AG04450 (cell line): ENCODE measurements at regions of chr16 and their contacts with region 1.

Region 1: GRCh38 chr16:58661199-58661830 is 23.3 kb downstream of the SLC38A7 start:
- DNase-seq: peak; percentile 66
- H3K4me3 ChIP-seq: no peak overlapping the region
- H3K27ac ChIP-seq: no peak overlapping the region
- H3K27me3 ChIP-seq: no peaks in the 10 kb centered on the region
- CTCF ChIP-seq: peak; percentile 81

Region 2: DNA sequence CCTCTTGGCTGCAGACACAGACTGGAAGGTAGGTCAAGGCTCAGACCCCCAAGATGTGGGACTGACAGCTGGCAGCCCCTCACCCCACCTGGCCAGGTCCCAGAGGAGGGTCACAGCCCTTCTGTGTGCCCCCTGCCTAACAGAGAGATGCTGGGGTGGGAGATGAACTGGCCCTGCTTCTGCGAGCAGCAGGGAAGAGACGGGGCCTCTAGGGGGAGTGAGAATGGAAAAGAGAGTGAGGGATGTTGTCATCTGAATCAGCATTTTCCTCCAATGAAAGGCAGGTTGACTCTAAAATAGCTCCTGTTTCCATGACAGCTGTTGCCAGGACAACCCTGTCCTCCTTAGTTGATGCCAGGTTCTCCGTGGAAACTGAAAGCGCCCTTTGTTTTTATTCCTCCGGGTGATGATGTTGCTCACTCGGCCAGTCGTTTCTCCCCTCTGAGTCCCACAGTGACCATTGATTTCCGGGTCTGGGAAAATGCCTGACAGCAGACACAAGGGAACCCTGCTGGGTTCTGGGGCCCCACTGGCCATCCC is 166.3 kb before region 1 on chr16:
- CTCF ChIA-PET with region 1: interaction called, 18 read pairs
- POLR2A ChIA-PET with region 1: no interaction called
- DNase-seq: peak; percentile 93
- H3K4me3 ChIP-seq: peak overlapping the region; percentile 31
- H3K27ac ChIP-seq: peak overlapping the region; percentile 85
- H3K27me3 ChIP-seq: peaks cover 6% of the 10 kb centered on the region
- CTCF ChIP-seq: peak; percentile 76

Region 3: DNA sequence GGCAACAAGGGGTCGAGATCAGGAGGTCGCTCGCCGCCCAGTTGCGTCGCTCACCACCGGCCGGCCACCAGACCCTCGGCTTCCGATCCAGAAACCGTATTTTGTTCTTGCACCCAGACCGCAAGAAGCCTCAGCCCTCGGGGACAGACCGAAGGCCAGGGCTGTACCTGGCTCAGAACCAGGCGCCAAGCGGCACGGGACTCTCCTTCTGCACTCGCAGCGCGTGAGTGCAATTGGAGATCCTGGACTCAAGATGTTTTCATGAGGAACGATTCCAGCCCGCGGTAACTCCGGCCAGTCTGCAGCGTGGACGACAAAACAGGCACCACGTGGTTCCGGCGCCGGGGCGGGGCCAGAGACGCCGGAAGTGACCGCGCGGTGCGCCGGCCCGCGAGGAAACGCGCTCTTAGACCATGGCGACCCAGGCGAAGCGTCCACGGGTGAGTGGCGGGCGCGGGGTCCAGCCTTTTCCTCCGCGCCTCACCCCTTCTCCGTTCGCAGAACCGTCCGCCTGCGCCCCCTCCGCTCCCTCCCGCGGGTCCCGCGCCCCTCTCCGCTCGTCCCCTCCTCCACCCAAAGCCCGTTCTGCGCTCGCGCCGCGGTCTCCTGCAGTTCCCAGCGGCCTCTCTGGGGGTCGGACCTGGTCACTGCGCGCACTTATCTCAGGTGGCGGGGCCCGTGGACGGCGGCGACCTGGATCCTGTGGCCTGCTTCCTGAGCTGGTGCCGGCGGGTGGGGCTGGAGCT is 146.0 kb before region 1 on chr16 and contains the start of gene SETD6:
- CTCF ChIA-PET with region 1: interaction called, 20 read pairs
- POLR2A ChIA-PET with region 1: no interaction called
- DNase-seq: peak; percentile 72
- H3K4me3 ChIP-seq: peak within 1 kb of the TSS; percentile 76
- H3K27ac ChIP-seq: peak within 1 kb of the TSS; percentile 68
- H3K27me3 ChIP-seq: no peaks in the 10 kb centered on the region
- CTCF ChIP-seq: no peak
- polyA plus RNA-seq, gene SETD6: 5.3 and 6.5 TPM in 2 replicates